Left cardiac atrium (tissue), 4 donors: ENCODE measurements at regions of chr15 and their contacts with region 1.

Region 1: DNA sequence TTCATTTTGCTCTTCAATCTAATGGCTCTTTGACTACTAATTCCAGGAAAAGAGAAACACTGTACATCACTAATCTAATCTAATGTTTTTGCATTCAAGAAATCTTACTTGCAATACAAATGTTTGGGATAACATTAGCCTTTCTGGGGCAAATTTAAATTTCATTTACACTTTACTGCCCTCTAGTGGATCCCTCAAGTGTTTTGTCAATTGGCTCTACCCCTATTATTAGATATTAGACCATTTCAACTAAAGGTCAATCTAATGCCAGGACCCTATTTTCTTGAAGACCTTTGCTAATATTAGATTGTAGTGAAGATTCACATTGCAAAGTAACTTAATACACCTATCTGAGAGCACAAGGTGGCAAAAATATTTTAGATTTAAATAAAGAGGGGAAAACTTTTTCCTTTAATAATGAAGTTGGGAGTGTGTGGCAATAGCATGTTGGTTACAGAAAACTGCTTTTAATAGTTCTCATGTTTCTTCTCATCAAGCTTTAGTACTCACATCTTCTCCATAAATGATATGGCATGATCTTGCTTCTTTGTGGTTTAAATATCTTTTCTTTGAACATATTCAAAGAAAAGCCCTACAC is 5.0 kb downstream of the C2CD4A start:
- DNase-seq: no peak
- ATAC-seq: no peak

Region 2: GRCh38 chr15:62306851-62307504 is 235.2 kb after region 1 on chr15:
- intact Hi-C with region 1: loop called in 1 of 2 experiments (anchors 10 kb)
- DNase-seq: peak; percentile 61
- ATAC-seq: peak; percentile 89 to 93